Body of pancreas (tissue), 4 donors: ENCODE measurements at regions of chr22 and their contacts with region 1.

Region 1: DNA sequence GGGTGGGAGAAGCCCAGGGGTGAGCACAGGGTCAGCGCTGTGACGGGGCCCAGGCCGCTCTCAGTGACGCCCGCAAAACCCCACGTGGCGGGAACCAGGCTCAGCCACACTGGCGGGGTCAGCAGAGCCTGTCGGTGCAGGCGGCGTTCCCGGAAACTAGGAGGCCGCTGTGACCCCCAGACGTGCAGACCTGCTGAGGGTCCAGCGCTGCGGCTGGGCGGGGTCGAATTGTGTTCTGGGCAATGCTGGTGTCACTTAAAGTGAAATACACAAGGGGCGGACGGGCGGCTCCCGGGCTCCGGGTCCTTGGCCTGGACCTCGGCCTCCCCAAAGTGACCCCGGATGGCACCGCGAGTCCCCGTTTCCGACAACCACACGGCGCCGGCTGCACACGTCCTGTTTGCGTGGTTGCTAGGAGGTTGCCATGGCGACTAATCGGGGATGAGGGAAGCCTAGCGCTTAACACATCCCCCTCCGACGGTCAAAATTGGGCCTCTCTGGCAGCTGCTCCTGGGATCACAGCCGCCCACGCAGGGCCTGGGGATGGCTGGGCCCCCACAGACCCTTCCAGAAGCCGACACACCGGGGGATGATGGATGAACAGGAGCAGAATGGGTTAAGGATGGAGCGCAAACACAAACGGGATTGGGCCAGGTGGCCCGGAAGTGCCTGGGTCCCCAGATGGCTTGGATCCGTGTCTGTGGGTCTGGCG is 81.7 kb upstream of the PRR5 start:
- DNase-seq: peak; percentile 37 to 69 (median 51)
- ATAC-seq: peak; percentile 27
- H3K4me3 ChIP-seq: no peak overlapping the region
- H3K27ac ChIP-seq: no peak overlapping the region
- H3K4me1 ChIP-seq: no peaks in the 10 kb centered on the region
- H3K27me3 ChIP-seq: peaks cover 0 to 4% of the 10 kb centered on the region in 2 donors
- CTCF ChIP-seq: no peak
- POLR2A ChIP-seq: no peak

Region 2: GRCh38 chr22:44080936-44081861 is 539.1 kb before region 1 on chr22:
- intact Hi-C with region 1: loop called (anchors 5 kb)
- DNase-seq: peak; percentile 71 to 85 (median 76)
- ATAC-seq: no peak
- H3K4me3 ChIP-seq: no peak overlapping the region
- H3K27ac ChIP-seq: no peak overlapping the region
- H3K4me1 ChIP-seq: no peaks in the 10 kb centered on the region
- H3K27me3 ChIP-seq: no peaks in the 10 kb centered on the region
- CTCF ChIP-seq: peak; percentile 58 to 85 (median 67)
- POLR2A ChIP-seq: no peak

Region 3: GRCh38 chr22:44567846-44568493 is 52.3 kb before region 1 on chr22:
- intact Hi-C with region 1: no loop called
- DNase-seq: peak; percentile 50 to 72 (median 56)
- ATAC-seq: no peak
- H3K4me3 ChIP-seq: no peak overlapping the region
- H3K27ac ChIP-seq: no peak overlapping the region
- H3K4me1 ChIP-seq: no peaks in the 10 kb centered on the region
- H3K27me3 ChIP-seq: no peaks in the 10 kb centered on the region
- CTCF ChIP-seq: peak; percentile 24 to 51 (median 38)
- POLR2A ChIP-seq: no peak

Region 4: DNA sequence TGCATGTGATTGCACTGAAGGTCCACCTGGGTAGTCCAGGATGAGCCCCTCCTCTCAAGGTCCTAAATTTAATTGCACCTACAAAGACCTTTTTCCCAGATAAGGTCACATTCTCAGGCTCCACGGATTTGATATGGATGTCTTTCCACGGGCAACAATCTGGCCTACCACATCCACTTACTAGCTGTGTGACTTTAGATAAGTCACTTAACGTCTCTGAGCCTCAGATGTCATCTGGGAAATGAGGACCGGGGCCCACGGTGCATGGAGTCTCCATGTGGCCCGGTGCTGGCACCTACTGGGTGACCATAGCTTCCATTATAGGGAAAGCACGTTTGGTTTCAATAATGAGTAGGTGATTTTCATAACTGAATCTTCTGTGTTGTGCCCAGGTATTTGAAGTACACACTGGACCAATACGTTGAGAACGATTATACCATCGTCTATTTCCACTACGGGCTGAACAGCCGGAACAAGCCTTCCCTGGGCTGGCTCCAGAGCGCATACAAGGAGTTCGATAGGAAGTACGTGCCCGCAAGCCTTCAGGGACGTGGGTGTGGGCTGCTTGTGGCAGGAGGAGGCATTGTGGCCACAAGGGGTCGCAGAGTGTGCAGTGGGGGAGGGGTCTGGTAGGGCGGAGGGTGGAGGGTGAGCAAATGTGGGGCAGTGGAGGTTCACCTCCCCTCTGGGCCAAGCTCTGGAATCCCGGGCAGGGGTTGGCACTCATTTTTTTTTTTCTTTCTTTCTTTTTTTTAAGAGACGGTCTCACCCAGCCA is 187.8 kb after region 1 on chr22:
- intact Hi-C with region 1: no loop called
- DNase-seq: no peak
- ATAC-seq: no peak
- H3K4me3 ChIP-seq: no peak overlapping the region
- H3K27ac ChIP-seq: no peak overlapping the region
- H3K4me1 ChIP-seq: no peaks in the 10 kb centered on the region
- H3K27me3 ChIP-seq: no peaks in the 10 kb centered on the region
- CTCF ChIP-seq: no peak
- POLR2A ChIP-seq: no peak